HEK293 (cell line): ENCODE measurements at regions of chr5 and their contacts with region 1.

Region 1: GRCh38 chr5:176447982-176448608 is at the start of gene FAF2:
- H3K4me3 ChIP-seq: peak within 1 kb of the TSS; percentile 92
- H3K27ac ChIP-seq: peak within 1 kb of the TSS; percentile 86
- H3K4me1 ChIP-seq: no peaks in the 10 kb centered on the region; the same call in 1 of the 2 replicates
- CTCF ChIP-seq: peak; percentile 97

Region 2: GRCh38 chr5:175734501-175734900 is 713.6 kb before region 1 on chr5:
- CTCF ChIA-PET with region 1: no interaction called
- POLR2A ChIA-PET with region 1: no interaction called
- H3K4me3 ChIP-seq: no peak overlapping the region
- H3K27ac ChIP-seq: no peak overlapping the region
- H3K4me1 ChIP-seq: no peaks in the 10 kb centered on the region
- CTCF ChIP-seq: no peak

Region 3: GRCh38 chr5:176415952-176416924 is 31.9 kb before region 1 on chr5 and contains the start of gene CLTB:
- CTCF ChIA-PET with region 1: interaction called, 43 read pairs
- POLR2A ChIA-PET with region 1: interaction called, 14 read pairs
- H3K4me3 ChIP-seq: peak within 1 kb of the TSS; percentile 77
- H3K27ac ChIP-seq: peak within 1 kb of the TSS; percentile 66; the same call in 1 of the 2 replicates
- H3K4me1 ChIP-seq: no peaks in the 10 kb centered on the region
- CTCF ChIP-seq: peak; percentile 75

Region 4: GRCh38 chr5:176466245-176466871 is 18.3 kb after region 1 on chr5:
- CTCF ChIA-PET with region 1: interaction called, 8 read pairs
- POLR2A ChIA-PET with region 1: interaction called, 19 read pairs
- H3K4me3 ChIP-seq: no peak overlapping the region
- H3K27ac ChIP-seq: no peak overlapping the region
- H3K4me1 ChIP-seq: peaks cover 11% of the 10 kb centered on the region; the same call in 1 of the 2 replicates
- CTCF ChIP-seq: no peak

Region 5: DNA sequence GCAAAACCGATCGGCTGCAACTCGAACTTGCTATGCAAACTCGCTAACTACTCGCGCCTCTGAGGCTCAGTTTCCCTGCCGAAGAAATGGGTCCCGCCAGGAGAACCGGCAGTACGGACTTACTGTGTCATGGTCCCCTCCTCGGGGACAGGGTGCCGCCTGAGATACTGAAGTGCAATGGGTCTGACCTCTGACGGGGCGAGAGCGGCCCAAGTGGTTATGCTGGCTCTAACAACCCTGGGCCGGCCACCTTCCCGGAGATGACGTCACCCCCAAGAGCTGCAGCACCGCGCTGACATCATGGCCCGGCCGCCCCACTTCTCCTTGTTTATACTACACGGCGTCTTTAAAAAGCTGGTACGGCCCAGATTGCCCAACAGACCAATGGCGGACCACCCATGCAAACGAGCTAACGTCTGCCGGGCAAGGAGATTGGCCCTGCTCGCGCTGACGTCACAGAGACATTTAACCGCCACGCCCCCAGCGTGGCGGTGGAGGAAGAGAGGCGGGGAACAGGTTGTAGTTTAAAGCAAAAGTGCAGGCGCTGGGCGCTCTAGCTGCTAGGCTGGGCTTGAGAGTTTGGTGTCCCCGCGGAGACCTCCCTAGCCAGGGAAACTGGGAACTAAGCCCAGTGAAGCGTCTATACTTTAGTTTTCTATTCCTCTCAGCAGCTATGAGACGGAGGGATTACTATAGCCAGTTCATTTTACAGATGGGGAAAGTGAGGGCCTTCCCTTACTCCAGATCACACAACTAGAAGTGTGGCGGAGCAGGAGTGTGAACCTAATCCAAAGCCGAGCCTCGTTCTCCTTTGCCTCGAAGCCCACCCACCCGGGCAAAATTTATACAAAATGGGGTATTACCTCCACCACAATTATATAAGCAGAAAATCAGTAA is 89.8 kb after region 1 on chr5:
- CTCF ChIA-PET with region 1: interaction called, 5 read pairs
- POLR2A ChIA-PET with region 1: interaction called, 14 read pairs
- H3K4me3 ChIP-seq: peak overlapping the region; percentile 85
- H3K27ac ChIP-seq: peak overlapping the region; percentile 54
- H3K4me1 ChIP-seq: peaks cover 8% of the 10 kb centered on the region; the same call in 1 of the 2 replicates
- CTCF ChIP-seq: no peak

Region 6: DNA sequence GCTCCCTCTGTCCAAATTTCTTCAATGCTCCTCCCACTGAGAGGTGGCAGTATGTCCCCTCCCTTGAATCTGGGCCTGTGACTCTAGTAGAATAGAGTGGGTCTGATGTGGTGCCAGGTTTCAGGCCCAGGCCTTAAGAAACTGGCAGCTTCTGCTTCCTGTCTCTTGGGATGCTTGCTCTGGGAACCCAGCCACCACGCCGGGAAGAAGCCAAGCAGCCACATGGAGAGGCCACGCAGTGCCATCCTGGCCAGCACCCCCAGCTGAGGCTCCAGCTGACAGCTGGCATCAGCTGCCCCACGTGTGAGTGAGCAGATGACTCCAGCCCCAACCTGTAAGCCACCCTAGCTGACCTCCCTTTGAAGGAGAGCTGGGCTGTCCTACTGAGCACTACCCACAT is 191.9 kb after region 1 on chr5:
- CTCF ChIA-PET with region 1: no interaction called
- POLR2A ChIA-PET with region 1: no interaction called
- H3K4me3 ChIP-seq: no peak overlapping the region
- H3K27ac ChIP-seq: no peak overlapping the region
- H3K4me1 ChIP-seq: no peaks in the 10 kb centered on the region
- CTCF ChIP-seq: no peak